ENCODE measurements at regions of chr19 and their contacts with region 1.

Region 1: GRCh38 chr19:55586976-55587668 is 6.5 kb upstream of the ZNF579 start:
- DNase-seq: peak; percentile 98
- ATAC-seq: peak; percentile 93

Region 2: DNA sequence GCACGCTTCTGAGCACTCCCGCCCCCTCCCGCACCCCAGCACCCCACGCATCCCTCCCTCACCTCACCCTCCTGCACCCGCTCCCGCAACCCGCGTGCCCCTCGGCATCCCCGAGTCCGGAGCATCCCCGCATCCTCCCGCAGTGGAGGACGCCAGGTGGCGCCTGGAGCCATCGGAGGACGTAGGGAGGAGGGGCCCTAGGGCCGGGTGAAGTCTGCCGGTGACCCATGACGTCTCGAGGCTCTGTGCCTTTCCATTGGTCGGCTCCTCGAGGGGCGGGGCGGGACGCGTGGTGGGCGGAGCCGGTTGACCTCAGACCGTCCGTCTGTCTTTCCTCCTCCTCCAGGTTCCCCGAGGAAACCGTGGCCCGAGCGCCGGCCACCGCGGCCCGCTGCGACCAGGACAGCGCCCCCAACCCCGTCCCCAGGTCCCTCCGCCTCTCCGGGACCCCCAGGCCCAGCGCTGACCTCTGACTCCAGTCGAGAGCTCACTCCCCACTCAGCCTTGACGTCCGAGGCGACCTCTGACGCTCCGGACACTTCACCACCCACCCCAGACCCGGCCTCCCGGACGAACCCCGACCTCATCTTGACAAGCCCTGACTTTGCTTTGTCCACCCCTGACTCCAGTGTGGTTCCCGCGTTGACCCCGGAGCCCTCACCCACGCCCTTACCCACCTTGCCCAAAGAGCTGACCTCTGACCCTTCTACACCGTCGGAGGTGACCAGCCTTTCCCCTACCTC is 70.1 kb before region 1 on chr19:
- intact Hi-C with region 1: loop called (anchors 10 kb)
- DNase-seq: peak; percentile 97
- ATAC-seq: peak; percentile 99

Region 3: DNA sequence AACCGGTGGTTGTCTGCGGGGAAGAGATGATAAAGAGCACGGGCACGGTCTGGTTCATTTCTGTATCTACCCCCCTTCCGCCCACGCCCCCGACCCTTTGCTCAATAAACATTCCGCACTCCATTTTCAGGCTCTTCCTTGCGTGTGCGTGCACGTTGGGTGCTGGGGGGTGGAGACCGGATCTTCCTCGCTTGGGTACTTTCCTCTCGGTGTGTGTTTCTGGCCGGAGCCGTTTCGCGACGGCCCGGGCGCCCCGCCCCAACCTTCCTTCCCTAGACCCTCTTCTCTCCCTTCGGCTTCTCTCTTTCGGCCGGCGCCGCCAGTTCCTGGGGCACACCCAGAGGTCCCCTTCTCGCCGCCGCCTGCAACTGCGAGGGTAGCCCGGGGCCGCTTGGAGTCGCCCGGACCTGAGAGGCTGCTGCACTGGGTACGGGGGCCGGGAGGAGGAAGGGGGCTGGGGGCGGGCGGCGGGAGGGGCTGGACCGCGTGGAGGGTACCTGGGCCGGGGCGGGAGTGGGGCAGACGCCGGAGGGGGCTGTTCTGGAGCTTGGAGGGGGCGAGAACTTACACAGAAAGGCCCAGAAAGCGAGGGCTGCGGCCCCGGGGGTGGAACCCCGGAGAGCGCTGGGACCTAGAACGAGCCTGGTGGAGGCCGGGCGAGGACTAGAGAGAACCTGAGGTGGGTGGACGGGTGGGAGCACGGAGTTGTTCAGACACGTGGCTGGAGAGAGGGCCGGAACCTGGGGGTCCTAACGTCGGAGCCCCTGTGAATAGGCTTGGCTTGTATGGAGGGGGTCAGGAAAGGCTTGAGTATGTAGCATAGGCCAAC is 56.4 kb after region 1 on chr19 and contains the start of gene ZNF581:
- intact Hi-C with region 1: no loop called
- DNase-seq: peak; percentile 81
- ATAC-seq: peak; percentile 56
- total RNA-seq, gene ZNF581: 17.2 TPM

Region 4: DNA sequence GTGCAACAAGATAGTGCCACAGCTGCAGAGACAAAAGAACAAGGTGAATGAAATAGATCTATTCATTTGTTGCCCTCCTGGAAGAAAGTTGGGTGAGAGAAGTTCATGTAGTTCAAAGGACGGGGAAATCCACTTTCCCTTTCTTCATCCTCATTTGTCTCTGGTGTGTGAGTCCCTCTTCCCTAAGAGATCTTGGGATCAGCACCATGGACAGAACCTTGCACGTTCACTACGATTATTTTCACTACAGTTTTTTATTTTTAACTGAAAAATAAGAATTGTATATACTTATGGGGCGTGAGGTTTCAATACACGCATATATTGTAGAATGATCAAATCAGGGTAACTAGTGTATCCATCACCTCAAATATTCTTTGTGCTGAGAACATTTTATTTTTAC is 428.6 kb after region 1 on chr19:
- intact Hi-C with region 1: no loop called
- DNase-seq: no peak
- ATAC-seq: no peak

Measured in sciatic nerve (tissue), 2 donors.